ENCODE measurements at regions of chr7 and their contacts with region 1.

Region 1: DNA sequence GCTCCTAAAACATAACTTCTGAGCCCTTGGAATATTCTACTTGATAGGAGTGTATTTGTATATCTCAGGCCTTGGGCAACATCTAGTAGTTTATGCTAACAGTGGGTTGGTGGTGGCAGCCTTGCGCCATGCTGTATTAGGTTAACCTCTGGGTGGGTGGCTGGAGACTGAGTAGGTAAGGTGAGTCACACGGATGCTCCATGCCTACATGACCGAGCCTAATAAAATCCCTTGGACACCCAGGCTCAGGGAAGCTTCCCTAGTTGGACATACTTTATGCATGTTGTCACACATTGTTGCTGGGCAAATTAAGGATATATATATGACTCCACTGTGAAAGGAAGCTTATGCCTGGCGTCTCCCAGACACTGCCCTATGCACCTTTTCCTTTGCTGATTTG is 6.0 kb upstream of the DAGLB start:
- DNase-seq: no peak
- ATAC-seq: peak; percentile 67
- H3K4me3 ChIP-seq: no peak overlapping the region
- H3K27ac ChIP-seq: no peak overlapping the region
- H3K4me1 ChIP-seq: peaks cover 7% of the 10 kb centered on the region
- H3K27me3 ChIP-seq: no peaks in the 10 kb centered on the region
- CTCF ChIP-seq: no peak

Region 2: GRCh38 chr7:6228361-6229229 is 225.1 kb before region 1 on chr7:
- CTCF ChIA-PET with region 1: no interaction called
- POLR2A ChIA-PET with region 1: no interaction called
- in situ Hi-C with region 1: no loop called
- intact Hi-C with region 1: no loop called
- DNase-seq: no peak
- ATAC-seq: no peak
- H3K4me3 ChIP-seq: no peak overlapping the region
- H3K27ac ChIP-seq: no peak overlapping the region
- H3K4me1 ChIP-seq: peaks cover 12% of the 10 kb centered on the region
- H3K27me3 ChIP-seq: no peaks in the 10 kb centered on the region
- CTCF ChIP-seq: no peak

Region 3: GRCh38 chr7:6435486-6436384 is 18.0 kb before region 1 on chr7:
- CTCF ChIA-PET with region 1: no interaction called
- POLR2A ChIA-PET with region 1: no interaction called
- in situ Hi-C with region 1: no loop called
- intact Hi-C with region 1: no loop called
- DNase-seq: no peak
- ATAC-seq: peak; percentile 92
- H3K4me3 ChIP-seq: no peak overlapping the region
- H3K27ac ChIP-seq: no peak overlapping the region
- H3K4me1 ChIP-seq: peaks cover 2% of the 10 kb centered on the region; the same call in 1 of the 2 replicates
- H3K27me3 ChIP-seq: no peaks in the 10 kb centered on the region
- CTCF ChIP-seq: peak; percentile 100

Region 4: DNA sequence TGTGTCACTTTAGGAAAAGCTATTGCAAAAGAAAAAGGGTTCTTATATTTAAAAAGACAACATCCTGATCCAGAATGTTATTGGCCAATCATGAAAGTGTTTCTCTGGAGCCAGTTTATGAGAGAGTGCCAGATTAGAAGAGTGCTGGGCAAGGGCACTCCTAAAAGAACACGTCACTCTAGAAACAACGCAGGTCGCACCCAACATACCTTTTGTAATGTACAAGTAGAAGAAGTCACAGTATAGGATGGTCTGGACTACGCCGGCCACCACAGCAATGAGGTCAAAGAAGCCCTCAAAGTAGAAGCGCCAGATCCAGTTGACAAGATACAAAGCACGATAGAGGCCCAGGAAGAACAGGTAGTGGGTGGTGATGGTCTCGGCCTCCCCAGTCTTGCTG is 12.1 kb after region 1 on chr7:
- CTCF ChIA-PET with region 1: no interaction called
- POLR2A ChIA-PET with region 1: interaction called, 14 read pairs
- in situ Hi-C with region 1: no loop called
- intact Hi-C with region 1: no loop called
- DNase-seq: no peak
- ATAC-seq: no peak
- H3K4me3 ChIP-seq: no peak overlapping the region
- H3K27ac ChIP-seq: no peak overlapping the region
- H3K4me1 ChIP-seq: no peaks in the 10 kb centered on the region
- H3K27me3 ChIP-seq: no peaks in the 10 kb centered on the region
- CTCF ChIP-seq: no peak